CD4-positive, alpha-beta memory T cell (primary cell): ENCODE measurements at regions of chr2 and their contacts with region 1.

Region 1: GRCh38 chr2:75608684-75609333 is 37.8 kb upstream of the MRPL19 start:
- DNase-seq: peak in 4 of 5 donors; percentile 22 to 46 (median 36)
- H3K4me3 ChIP-seq: no peak overlapping the region
- H3K4me3 Mint-ChIP-seq: peak overlapping the region in 3 of 8 donors; percentile 12 to 42 (median 36)
- H3K27ac ChIP-seq: no peak overlapping the region
- H3K27ac Mint-ChIP-seq: no peak overlapping the region
- H3K4me1 ChIP-seq: peaks cover 5% of the 10 kb centered on the region
- H3K4me1 Mint-ChIP-seq: peaks cover 0 to 3% (median 0%) of the 10 kb centered on the region in 4 donors
- H3K27me3 ChIP-seq: peaks cover 11% of the 10 kb centered on the region
- H3K27me3 Mint-ChIP-seq: peaks cover 35 to 48% of the 10 kb centered on the region in 2 donors

Region 2: DNA sequence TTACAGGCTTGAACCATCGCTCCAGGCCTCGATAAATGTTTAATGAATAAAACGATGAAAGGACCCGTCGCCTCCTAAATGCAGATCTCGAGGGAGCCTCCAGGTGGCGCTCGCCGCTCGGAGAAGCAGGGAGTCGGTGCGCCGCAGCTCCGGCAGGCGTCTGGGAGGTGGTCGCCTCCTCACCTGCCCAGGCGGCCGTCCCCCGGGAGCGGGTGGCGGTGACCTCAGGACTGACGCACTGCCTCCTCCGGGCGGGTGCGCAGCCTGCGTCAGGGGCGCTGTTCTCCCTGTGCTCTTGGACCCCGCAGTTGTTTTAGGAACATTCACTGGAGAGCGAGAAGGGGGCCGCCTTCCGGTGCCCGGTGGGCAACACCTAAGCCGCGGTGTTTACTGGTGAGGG is 689.0 kb before region 1 on chr2:
- CTCF ChIA-PET with region 1: interaction called, 18 read pairs
- POLR2A ChIA-PET with region 1: no interaction called
- intact Hi-C with region 1: loop called (anchors 1 kb)
- DNase-seq: peak; percentile 58 to 64 (median 63)
- H3K4me3 ChIP-seq: no peak overlapping the region
- H3K4me3 Mint-ChIP-seq: peak overlapping the region in 2 of 8 donors; percentile 33 to 36
- H3K27ac ChIP-seq: no peak overlapping the region
- H3K27ac Mint-ChIP-seq: no peak overlapping the region
- H3K4me1 ChIP-seq: no peaks in the 10 kb centered on the region
- H3K4me1 Mint-ChIP-seq: peaks cover 0 to 3% (median 0%) of the 10 kb centered on the region in 4 donors
- H3K27me3 ChIP-seq: no peaks in the 10 kb centered on the region
- H3K27me3 Mint-ChIP-seq: peaks cover 3 to 14% of the 10 kb centered on the region in 2 donors

Region 3: GRCh38 chr2:75064691-75065396 is 544.0 kb before region 1 on chr2:
- CTCF ChIA-PET with region 1: interaction called, 3 read pairs
- POLR2A ChIA-PET with region 1: no interaction called
- intact Hi-C with region 1: loop called (anchors 5 kb)
- DNase-seq: peak in 4 of 5 donors; percentile 18 to 30 (median 26)
- H3K4me3 ChIP-seq: no peak overlapping the region
- H3K4me3 Mint-ChIP-seq: no peak overlapping the region
- H3K27ac ChIP-seq: no peak overlapping the region
- H3K27ac Mint-ChIP-seq: no peak overlapping the region
- H3K4me1 ChIP-seq: no peaks in the 10 kb centered on the region
- H3K4me1 Mint-ChIP-seq: no peaks in the 10 kb centered on the region
- H3K27me3 ChIP-seq: no peaks in the 10 kb centered on the region
- H3K27me3 Mint-ChIP-seq: no peaks in the 10 kb centered on the region

Region 4: DNA sequence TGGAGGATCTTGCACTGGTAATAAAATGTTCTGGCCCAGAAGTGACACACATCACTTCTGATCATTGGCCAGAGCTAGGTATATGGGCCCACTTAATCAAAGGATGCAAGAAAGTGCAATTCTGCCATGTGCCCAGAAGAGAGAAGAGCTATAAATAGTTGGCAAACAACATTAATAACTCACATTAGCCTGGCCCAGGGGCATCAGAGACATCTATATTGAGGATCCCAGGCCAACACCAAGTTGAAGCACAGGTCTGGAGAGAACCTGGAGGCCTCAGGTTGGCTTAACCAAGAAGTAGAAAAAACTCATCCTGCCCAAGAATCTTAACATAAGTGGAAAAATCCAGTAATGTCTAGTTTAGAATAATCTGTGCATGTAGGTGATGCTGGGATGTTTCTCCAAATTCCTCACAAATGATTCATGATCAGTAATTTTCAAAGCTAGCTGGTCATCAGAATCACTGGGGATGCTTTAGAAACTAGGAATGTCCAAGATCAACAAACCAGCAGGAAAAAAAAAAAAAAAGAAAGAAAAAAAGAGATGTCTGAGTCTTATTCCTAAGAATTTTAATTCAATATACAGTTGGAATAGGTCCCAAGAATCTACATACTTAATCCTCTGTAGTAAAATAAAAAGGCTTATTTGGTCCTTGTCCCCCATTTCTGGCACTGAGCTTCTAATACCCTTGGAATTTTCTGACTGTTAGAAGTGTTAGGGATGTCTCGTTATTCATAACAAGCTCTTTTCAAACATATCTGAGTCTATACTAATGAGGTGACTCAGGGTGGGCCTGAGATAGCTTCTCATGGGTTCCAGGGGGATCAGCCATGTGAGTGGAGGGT is 13.0 kb before region 1 on chr2:
- CTCF ChIA-PET with region 1: interaction called, 16 read pairs
- POLR2A ChIA-PET with region 1: no interaction called
- intact Hi-C with region 1: no loop called
- DNase-seq: no peak
- H3K4me3 ChIP-seq: no peak overlapping the region
- H3K4me3 Mint-ChIP-seq: no peak overlapping the region
- H3K27ac ChIP-seq: no peak overlapping the region
- H3K27ac Mint-ChIP-seq: no peak overlapping the region
- H3K4me1 ChIP-seq: no peaks in the 10 kb centered on the region
- H3K4me1 Mint-ChIP-seq: no peaks in the 10 kb centered on the region
- H3K27me3 ChIP-seq: no peaks in the 10 kb centered on the region
- H3K27me3 Mint-ChIP-seq: peaks cover 3 to 7% of the 10 kb centered on the region in 2 donors

Region 5: DNA sequence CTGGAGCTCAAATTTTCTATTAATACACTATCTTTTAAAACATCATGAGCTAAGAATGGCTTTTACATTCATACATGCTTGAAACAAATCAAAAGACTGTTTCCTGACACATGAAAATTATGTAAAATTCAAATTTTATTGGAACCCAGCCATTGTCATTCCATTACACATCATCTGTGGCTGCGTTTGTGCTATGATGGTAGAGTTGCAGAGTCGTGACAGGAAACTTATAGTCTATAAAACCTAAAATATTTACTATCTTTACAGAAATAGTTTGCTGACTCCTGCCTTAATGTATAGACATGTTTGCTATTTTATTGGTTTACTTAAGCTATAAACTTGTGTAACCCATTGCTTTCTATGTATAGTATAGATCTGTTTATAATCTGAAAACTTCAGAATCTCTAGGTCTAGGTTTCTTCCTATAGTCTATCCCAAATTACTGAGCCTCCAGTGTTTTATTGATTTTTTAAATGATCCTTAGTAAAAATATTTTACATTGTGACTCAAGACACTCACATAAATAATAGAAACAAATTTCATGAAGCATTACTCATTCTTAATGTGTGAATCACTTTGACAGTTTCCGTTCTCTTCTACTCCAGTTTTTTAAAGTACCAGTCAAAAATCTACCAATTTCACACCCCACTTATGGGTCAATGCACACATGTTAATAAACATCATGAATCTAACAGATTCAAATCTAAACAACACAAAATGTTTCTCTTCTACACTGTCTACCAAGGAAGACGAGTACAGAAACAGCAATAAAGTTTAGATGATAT is 11.3 kb after region 1 on chr2:
- CTCF ChIA-PET with region 1: interaction called, 24 read pairs
- POLR2A ChIA-PET with region 1: no interaction called
- intact Hi-C with region 1: no loop called
- DNase-seq: no peak
- H3K4me3 ChIP-seq: no peak overlapping the region
- H3K4me3 Mint-ChIP-seq: no peak overlapping the region
- H3K27ac ChIP-seq: no peak overlapping the region
- H3K27ac Mint-ChIP-seq: no peak overlapping the region
- H3K4me1 ChIP-seq: no peaks in the 10 kb centered on the region
- H3K4me1 Mint-ChIP-seq: no peaks in the 10 kb centered on the region
- H3K27me3 ChIP-seq: no peaks in the 10 kb centered on the region
- H3K27me3 Mint-ChIP-seq: peaks cover 16 to 20% of the 10 kb centered on the region in 2 donors

Region 6: DNA sequence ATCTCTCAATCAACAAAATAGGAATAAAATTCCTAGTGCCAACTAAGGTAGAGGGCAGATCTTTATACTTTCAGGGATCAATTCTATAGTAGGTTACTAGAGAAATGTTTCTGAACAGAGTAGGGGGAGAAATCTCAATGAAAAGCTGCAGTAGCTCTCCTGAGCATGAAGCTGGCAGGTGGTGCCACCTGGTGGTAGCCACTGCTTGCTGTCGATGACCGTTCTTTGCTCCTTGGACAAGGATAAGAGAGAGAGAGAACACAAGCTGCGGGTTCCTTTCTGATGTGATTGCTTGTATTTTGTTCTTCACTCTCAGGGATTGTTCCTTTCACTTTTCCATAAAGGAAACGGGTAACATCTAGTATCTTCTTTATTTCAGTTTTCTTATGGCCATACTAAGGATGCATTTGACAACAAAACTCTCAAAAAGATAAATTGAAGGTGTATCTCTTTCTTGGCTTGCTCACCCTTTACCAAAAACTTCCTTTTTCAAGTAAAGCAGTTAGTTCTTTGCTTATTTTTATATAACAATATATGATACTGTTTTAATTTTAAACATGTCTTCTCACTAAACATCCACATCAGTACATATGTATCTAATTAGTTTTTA is 19.2 kb after region 1 on chr2:
- CTCF ChIA-PET with region 1: interaction called, 16 read pairs
- POLR2A ChIA-PET with region 1: no interaction called
- intact Hi-C with region 1: no loop called
- DNase-seq: peak; percentile 24 to 50 (median 29)
- H3K4me3 ChIP-seq: no peak overlapping the region
- H3K4me3 Mint-ChIP-seq: no peak overlapping the region
- H3K27ac ChIP-seq: no peak overlapping the region
- H3K27ac Mint-ChIP-seq: no peak overlapping the region
- H3K4me1 ChIP-seq: no peaks in the 10 kb centered on the region
- H3K4me1 Mint-ChIP-seq: peaks cover 0 to 4% (median 0%) of the 10 kb centered on the region in 4 donors
- H3K27me3 ChIP-seq: no peaks in the 10 kb centered on the region
- H3K27me3 Mint-ChIP-seq: peaks cover 16 to 28% of the 10 kb centered on the region in 2 donors

Region 7: GRCh38 chr2:75640621-75641121 is 31.9 kb after region 1 on chr2:
- CTCF ChIA-PET with region 1: interaction called, 10 read pairs
- POLR2A ChIA-PET with region 1: no interaction called
- intact Hi-C with region 1: no loop called
- DNase-seq: peak in 4 of 5 donors; percentile 15 to 34 (median 28)
- H3K4me3 ChIP-seq: no peak overlapping the region
- H3K4me3 Mint-ChIP-seq: no peak overlapping the region
- H3K27ac ChIP-seq: no peak overlapping the region
- H3K27ac Mint-ChIP-seq: no peak overlapping the region
- H3K4me1 ChIP-seq: no peaks in the 10 kb centered on the region
- H3K4me1 Mint-ChIP-seq: peaks cover 0 to 2% (median 0%) of the 10 kb centered on the region in 4 donors
- H3K27me3 ChIP-seq: no peaks in the 10 kb centered on the region
- H3K27me3 Mint-ChIP-seq: peaks cover 14 to 16% of the 10 kb centered on the region in 2 donors

Region 8: GRCh38 chr2:75764611-75765010 is 155.8 kb after region 1 on chr2:
- CTCF ChIA-PET with region 1: no interaction called
- POLR2A ChIA-PET with region 1: no interaction called
- intact Hi-C with region 1: no loop called
- DNase-seq: no peak
- H3K4me3 ChIP-seq: no peak overlapping the region
- H3K4me3 Mint-ChIP-seq: no peak overlapping the region
- H3K27ac ChIP-seq: no peak overlapping the region
- H3K27ac Mint-ChIP-seq: no peak overlapping the region
- H3K4me1 ChIP-seq: no peaks in the 10 kb centered on the region
- H3K4me1 Mint-ChIP-seq: no peaks in the 10 kb centered on the region
- H3K27me3 ChIP-seq: no peaks in the 10 kb centered on the region
- H3K27me3 Mint-ChIP-seq: peaks cover 5 to 18% of the 10 kb centered on the region in 2 donors

Region 9: DNA sequence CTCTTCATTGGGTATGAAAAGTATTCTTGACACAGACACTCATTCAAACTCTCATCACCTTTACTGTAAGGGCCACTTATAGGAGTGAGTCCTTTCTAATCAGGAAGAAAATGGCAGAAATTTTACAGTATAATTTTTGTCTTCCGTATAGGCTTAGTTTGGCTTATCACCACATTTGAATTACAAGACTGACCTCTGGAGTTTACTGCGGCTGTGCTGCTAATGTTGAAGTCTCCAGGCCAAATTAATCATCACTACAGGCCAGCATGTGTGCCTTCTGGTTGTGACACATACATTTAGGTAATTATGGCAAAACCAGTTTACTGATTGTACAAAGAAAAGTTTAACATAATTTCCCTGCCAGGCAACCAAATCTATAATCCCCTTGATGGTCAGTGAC is 855.5 kb after region 1 on chr2:
- CTCF ChIA-PET with region 1: no interaction called
- POLR2A ChIA-PET with region 1: no interaction called
- intact Hi-C with region 1: no loop called
- DNase-seq: no peak
- H3K4me3 ChIP-seq: no peak overlapping the region
- H3K4me3 Mint-ChIP-seq: no peak overlapping the region
- H3K27ac ChIP-seq: no peak overlapping the region
- H3K27ac Mint-ChIP-seq: no peak overlapping the region
- H3K4me1 ChIP-seq: no peaks in the 10 kb centered on the region
- H3K4me1 Mint-ChIP-seq: no peaks in the 10 kb centered on the region
- H3K27me3 ChIP-seq: no peaks in the 10 kb centered on the region
- H3K27me3 Mint-ChIP-seq: no peaks in the 10 kb centered on the region